Panc1 (cell line): ENCODE measurements at regions of chr16 and their contacts with region 1.

Region 1: GRCh38 chr16:65671-66137 is 6.7 kb downstream of the RHBDF1 start:
- DNase-seq: peak; percentile 57
- ATAC-seq: peak; percentile 83
- H3K4me3 ChIP-seq: no peak overlapping the region
- H3K27ac ChIP-seq: no peak overlapping the region
- H3K4me1 ChIP-seq: peaks cover 28% of the 10 kb centered on the region
- H3K27me3 ChIP-seq: no peaks in the 10 kb centered on the region
- CTCF ChIP-seq: peak; percentile 99

Region 2: DNA sequence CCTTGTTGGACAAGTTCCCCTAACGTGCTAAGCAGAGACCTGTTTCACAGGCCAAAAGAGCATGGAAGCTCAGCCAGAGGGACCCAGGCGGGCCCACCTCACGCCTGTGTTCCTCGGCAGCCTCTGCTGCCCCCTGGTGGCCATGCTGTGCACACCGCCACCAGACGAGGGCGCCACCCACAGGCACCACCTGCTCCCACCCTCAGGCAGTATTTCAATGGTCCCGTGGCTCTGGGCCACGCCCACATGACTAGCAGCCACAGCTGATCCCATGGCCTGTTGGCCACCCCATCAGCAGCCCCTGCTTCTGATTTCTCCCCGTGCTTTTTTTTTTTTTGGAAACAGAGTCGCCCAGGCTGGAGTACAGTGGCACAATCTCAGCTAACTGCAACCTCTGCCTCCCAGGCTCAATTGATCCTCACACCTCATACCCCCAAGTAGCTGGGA is 31.3 kb after region 1 on chr16:
- CTCF ChIA-PET with region 1: interaction called, 16 read pairs
- POLR2A ChIA-PET with region 1: no interaction called
- in situ Hi-C with region 1: no loop called
- intact Hi-C with region 1: loop called (anchors 2 kb)
- DNase-seq: peak; percentile 60
- ATAC-seq: peak; percentile 84
- H3K4me3 ChIP-seq: no peak overlapping the region
- H3K27ac ChIP-seq: no peak overlapping the region
- H3K4me1 ChIP-seq: 0 out of 2 replicates have a peak, but pooled peaks cover 2% of the 10 kb centered on the region
- H3K27me3 ChIP-seq: no peaks in the 10 kb centered on the region
- CTCF ChIP-seq: peak; percentile 99